ENCODE measurements at regions of chr6 and their contacts with region 1.

Region 1: GRCh38 chr6:118283766-118284165 is 264.3 kb upstream of the PLN start:
- DNase-seq: peak; percentile 2 to 66
- H3K4me3 ChIP-seq: no peak overlapping the region
- H3K27ac ChIP-seq: no peak overlapping the region
- H3K4me1 ChIP-seq: no peaks in the 10 kb centered on the region
- H3K27me3 ChIP-seq: no peaks in the 10 kb centered on the region
- CTCF ChIP-seq: peak; percentile 89

Region 2: DNA sequence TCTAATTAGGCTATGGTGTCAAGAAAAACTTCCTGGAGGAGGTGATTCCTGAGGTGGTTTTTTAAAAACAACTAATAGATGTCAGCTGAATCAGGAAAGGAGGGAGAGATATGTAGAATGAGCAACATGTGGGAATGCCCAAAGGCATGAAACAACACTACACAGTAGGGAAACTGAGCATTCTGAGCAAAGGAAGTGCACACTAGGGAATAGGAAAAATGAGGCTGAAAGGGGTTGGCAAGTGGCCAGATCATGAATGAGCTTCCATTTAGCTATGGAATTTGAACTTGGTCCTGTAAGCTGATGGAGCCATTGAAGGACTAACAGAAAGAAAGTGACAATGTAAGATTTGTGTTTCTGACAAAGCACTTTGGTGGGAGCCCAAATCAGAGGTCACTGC is 393.6 kb before region 1 on chr6:
- CTCF ChIA-PET with region 1: no interaction called
- POLR2A ChIA-PET with region 1: no interaction called
- intact Hi-C with region 1: no loop called
- DNase-seq: no peak
- H3K4me3 ChIP-seq: no peak overlapping the region
- H3K27ac ChIP-seq: no peak overlapping the region
- H3K4me1 ChIP-seq: no peaks in the 10 kb centered on the region
- H3K27me3 ChIP-seq: no peaks in the 10 kb centered on the region
- CTCF ChIP-seq: no peak

Region 3: GRCh38 chr6:118263921-118264486 is 19.8 kb before region 1 on chr6:
- CTCF ChIA-PET with region 1: no interaction called
- POLR2A ChIA-PET with region 1: no interaction called
- intact Hi-C with region 1: no loop called
- DNase-seq: peak in 1 of 2 experiments; percentile 31
- H3K4me3 ChIP-seq: no peak overlapping the region
- H3K27ac ChIP-seq: no peak overlapping the region
- H3K4me1 ChIP-seq: no peaks in the 10 kb centered on the region
- H3K27me3 ChIP-seq: no peaks in the 10 kb centered on the region
- CTCF ChIP-seq: peak; percentile 50; the same call in 1 of the 2 replicates

Region 4: GRCh38 chr6:118509009-118509617 is 225.3 kb after region 1 on chr6:
- CTCF ChIA-PET with region 1: no interaction called
- POLR2A ChIA-PET with region 1: no interaction called
- intact Hi-C with region 1: loop called (anchors 5 kb)
- DNase-seq: peak in 1 of 2 experiments; percentile 4
- H3K4me3 ChIP-seq: no peak overlapping the region
- H3K27ac ChIP-seq: no peak overlapping the region
- H3K4me1 ChIP-seq: no peaks in the 10 kb centered on the region
- H3K27me3 ChIP-seq: no peaks in the 10 kb centered on the region
- CTCF ChIP-seq: peak; percentile 93

Region 5: DNA sequence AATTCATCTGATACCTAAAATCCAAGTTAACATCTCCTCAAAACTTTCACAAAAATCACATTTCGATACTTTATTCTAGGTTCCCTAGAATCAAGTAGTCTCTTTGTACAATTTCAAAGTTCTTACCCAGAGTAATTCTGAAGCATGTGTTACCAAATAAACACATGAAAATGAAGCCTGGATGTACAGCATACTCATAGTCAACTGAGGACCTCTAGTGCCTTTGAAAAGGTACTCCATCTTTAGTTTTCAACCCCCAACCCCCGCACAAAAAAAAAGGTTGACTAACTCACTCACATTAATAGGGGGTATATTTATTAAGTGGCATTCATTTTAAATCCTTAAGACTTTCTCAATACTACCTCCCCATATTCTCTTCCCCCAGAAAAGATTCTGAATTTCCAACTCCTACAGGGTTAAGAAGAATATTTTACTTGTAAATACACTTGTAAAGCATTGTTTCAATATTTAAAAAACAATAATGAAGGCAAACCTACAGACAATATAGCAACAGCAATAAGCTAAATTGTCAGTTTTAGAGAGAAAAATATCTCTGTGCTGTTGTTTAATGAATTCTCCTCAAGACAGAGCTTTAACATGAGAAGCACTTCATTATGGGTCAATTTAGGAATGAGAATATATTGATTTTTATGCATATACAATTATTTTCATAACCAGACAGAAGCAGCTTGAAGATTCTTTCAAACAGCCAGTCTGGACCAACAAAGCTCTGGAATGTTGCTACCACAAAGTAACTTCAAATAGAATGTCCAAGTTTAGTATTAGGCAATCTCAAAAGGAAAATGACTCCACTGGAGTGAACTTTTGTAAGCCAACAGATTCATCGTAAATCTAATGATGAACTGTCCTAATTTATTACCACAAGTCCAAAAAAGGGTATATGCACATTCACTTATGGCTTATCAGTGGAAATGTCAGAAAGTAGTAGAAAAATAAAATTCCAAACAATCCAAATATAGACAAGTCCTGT is 267.6 kb after region 1 on chr6:
- CTCF ChIA-PET with region 1: no interaction called
- POLR2A ChIA-PET with region 1: no interaction called
- intact Hi-C with region 1: loop called (anchors 5 kb)
- DNase-seq: peak; percentile 10 to 51
- H3K4me3 ChIP-seq: no peak overlapping the region
- H3K27ac ChIP-seq: no peak overlapping the region
- H3K4me1 ChIP-seq: no peaks in the 10 kb centered on the region
- H3K27me3 ChIP-seq: no peaks in the 10 kb centered on the region
- CTCF ChIP-seq: peak; percentile 88

Region 6: DNA sequence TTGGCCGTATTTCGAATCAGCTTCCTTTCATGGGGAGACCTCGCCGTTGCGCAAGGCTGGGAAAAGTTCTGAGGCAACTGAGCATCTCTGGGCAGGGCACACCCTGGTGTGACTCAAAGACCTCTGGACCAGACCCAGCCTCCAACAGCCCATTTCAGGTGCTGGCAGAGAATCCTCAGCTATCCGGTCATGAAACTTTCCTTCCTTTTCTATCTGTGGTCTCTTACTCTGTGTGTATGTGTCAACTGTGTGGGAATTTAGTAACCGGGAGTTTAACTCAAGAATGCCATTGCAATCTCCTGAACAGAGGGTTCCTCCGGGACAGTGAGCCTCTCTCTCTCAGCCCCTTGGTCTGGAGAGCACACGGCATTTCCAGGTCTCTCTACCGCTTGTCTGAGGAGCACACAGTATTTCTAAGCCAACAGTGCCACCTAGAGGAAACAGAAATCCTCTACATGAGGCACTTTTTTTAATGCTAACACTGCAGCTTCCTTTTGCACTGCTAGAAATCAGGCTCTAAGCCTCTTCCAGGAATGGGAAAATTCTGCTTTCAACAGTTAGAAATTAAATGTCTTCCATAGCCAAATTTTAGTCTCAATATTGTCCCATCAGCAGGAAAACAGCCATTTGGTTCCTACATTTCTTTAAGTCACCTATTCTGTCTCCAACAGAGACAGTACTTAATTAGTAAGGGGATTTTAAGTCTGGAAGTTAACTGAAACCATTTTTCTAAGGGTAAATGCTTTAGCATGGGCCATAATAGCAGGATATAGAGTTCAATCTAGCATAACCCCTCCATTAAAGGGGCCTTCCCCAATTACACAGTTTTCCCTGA is 297.0 kb after region 1 on chr6:
- CTCF ChIA-PET with region 1: no interaction called
- POLR2A ChIA-PET with region 1: no interaction called
- intact Hi-C with region 1: loop called (anchors 2 kb)
- DNase-seq: no peak
- H3K4me3 ChIP-seq: no peak overlapping the region
- H3K27ac ChIP-seq: no peak overlapping the region
- H3K4me1 ChIP-seq: no peaks in the 10 kb centered on the region
- H3K27me3 ChIP-seq: no peaks in the 10 kb centered on the region
- CTCF ChIP-seq: peak; percentile 79

Region 7: GRCh38 chr6:118800394-118801071 is 516.8 kb after region 1 on chr6:
- CTCF ChIA-PET with region 1: no interaction called
- POLR2A ChIA-PET with region 1: no interaction called
- intact Hi-C with region 1: loop called (anchors 2 kb)
- DNase-seq: peak; percentile 60 to 75
- H3K4me3 ChIP-seq: no peak overlapping the region
- H3K27ac ChIP-seq: no peak overlapping the region
- H3K4me1 ChIP-seq: no peaks in the 10 kb centered on the region
- H3K27me3 ChIP-seq: no peaks in the 10 kb centered on the region
- CTCF ChIP-seq: peak; percentile 99